ENCODE measurements at regions of chr11 and their contacts with region 1.

Region 1: GRCh38 chr11:128896356-128896755 is 5.2 kb downstream of the KCNJ5 start:
- DNase-seq: no peak

Region 2: DNA sequence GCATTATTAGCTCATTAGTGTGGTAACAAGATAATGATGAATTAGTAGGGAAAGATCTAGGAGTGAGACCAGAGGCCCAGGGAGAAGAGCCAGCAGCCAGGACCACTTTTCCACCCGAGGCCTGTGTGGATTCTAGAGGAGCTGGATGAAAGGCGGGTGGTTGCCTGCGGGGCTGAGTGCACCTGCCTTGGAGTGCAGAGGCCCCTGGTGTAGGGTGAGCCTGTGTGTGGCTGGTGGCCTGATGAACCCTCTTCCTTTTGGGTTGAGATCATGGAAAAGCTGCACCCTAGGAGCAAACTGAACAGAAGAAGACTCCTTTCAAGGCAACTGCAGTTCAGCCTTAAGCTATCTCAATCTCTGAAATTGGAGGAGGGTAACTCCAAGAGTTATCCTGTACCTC is 52.2 kb after region 1 on chr11:
- intact Hi-C with region 1: loop called in 1 of 2 experiments (anchors 2 kb)
- DNase-seq: peak; percentile 30